ENCODE measurements at regions of chr20 and their contacts with region 1.

Region 1: GRCh38 chr20:3218307-3218988 is 9.2 kb downstream of the ITPA start:
- DNase-seq: peak; percentile 46
- H3K4me3 ChIP-seq: no peak overlapping the region
- H3K27ac ChIP-seq: no peak overlapping the region
- H3K4me1 ChIP-seq: no peaks in the 10 kb centered on the region
- H3K27me3 ChIP-seq: no peaks in the 10 kb centered on the region
- CTCF ChIP-seq: peak; percentile 93
- POLR2A ChIP-seq: no peak

Region 2: DNA sequence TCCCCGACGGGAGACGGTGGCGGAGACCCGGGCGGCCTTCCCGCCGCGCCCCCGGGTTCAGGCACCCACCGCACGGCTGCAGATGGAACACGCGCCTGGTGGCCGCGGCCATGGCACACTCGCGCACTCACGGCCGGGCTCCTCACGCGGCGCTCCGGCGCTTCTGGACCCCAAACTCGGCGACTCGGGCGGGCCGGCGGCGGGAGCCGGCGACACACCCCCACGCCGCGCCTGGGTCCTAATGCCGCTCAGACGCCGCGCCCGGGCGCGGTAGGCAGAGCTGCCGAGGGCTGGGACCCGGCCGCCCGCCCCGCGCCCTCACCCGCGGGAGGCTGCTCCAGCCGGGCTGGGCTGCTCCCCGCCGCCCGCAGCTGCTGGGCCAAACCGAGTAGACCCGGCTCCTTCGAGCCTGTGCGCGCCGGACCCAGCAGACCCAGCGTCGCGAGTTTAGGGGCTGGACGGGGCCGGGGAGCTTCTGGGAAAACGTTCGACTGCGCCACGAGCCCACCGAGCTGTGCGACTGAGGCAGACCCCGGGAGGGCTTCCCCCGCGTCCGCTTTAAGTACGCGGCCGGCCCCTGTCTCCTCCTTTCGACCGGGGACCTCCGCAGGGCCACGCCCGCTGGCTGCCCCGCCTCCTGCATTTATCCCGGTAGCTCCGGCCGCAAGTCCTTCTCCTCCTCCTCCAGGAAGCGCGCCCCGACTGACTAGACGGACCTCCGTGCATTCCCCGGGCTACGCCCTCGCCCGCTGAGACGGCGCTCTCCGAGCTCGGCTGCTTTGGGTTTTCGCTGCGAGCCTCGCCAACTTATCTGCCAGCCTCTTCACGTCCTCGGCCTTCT is 20.8 kb after region 1 on chr20 and contains the start of gene SLC4A11:
- CTCF ChIA-PET with region 1: interaction called, 5 read pairs
- POLR2A ChIA-PET with region 1: no interaction called
- dilution Hi-C with region 1: no loop called
- intact Hi-C with region 1: loop called (anchors 1 kb)
- DNase-seq: peak; percentile 69
- H3K4me3 ChIP-seq: peak within 1 kb of the TSS; percentile 71 to 72 (median 71)
- H3K27ac ChIP-seq: no peak within 1 kb of the TSS
- H3K4me1 ChIP-seq: peaks cover 14% of the 10 kb centered on the region
- H3K27me3 ChIP-seq: peaks cover 0 to 12% of the 10 kb centered on the region in 2 experiments
- CTCF ChIP-seq: no peak
- POLR2A ChIP-seq: peak; percentile 73
- total RNA-seq, gene SLC4A11: 10.2 and 15.5 TPM in 2 replicates

Region 3: DNA sequence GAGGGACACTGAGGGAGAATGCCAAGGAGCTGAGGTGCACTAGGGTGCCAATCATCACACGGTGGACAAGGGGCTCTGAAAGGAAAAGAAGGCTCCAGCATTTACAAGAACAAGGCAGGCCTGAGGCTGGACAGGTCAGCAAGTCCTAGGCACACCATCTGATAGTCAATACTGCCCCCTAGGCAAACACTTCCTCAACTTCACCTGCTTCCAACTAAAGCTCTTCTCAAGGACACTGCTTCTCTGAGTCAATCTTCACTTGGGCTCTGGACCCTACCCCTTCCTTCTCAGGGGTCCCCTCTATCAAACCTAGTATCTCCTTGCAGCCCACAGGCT is 58.2 kb after region 1 on chr20:
- CTCF ChIA-PET with region 1: interaction called, 21 read pairs
- POLR2A ChIA-PET with region 1: no interaction called
- dilution Hi-C with region 1: no loop called
- intact Hi-C with region 1: loop called (anchors 1 kb)
- DNase-seq: peak; percentile 37
- H3K4me3 ChIP-seq: no peak overlapping the region
- H3K27ac ChIP-seq: no peak overlapping the region
- H3K4me1 ChIP-seq: no peaks in the 10 kb centered on the region
- H3K27me3 ChIP-seq: no peaks in the 10 kb centered on the region
- CTCF ChIP-seq: peak; percentile 13 to 33
- POLR2A ChIP-seq: no peak

Region 4: GRCh38 chr20:3312940-3313682 is 94.7 kb after region 1 on chr20:
- CTCF ChIA-PET with region 1: interaction called, 31 read pairs
- POLR2A ChIA-PET with region 1: no interaction called
- dilution Hi-C with region 1: no loop called
- intact Hi-C with region 1: loop called (anchors 1 kb)
- DNase-seq: peak; percentile 82
- H3K4me3 ChIP-seq: no peak overlapping the region
- H3K27ac ChIP-seq: no peak overlapping the region
- H3K4me1 ChIP-seq: peaks cover 13% of the 10 kb centered on the region
- H3K27me3 ChIP-seq: no peaks in the 10 kb centered on the region
- CTCF ChIP-seq: no peak
- POLR2A ChIP-seq: no peak

Region 5: GRCh38 chr20:3470627-3471396 is 252.4 kb after region 1 on chr20 and contains the start of gene ATRN:
- CTCF ChIA-PET with region 1: no interaction called
- POLR2A ChIA-PET with region 1: no interaction called
- dilution Hi-C with region 1: no loop called
- intact Hi-C with region 1: loop called (anchors 10 kb)
- DNase-seq: peak; percentile 93
- H3K4me3 ChIP-seq: peak within 1 kb of the TSS; percentile 79 to 87 (median 85)
- H3K27ac ChIP-seq: peak within 1 kb of the TSS; percentile 79
- H3K4me1 ChIP-seq: peaks cover 11% of the 10 kb centered on the region
- H3K27me3 ChIP-seq: peaks cover 10 to 16% of the 10 kb centered on the region in 2 experiments
- CTCF ChIP-seq: no peak
- POLR2A ChIP-seq: peak; percentile 98
- total RNA-seq, gene ATRN: 33.1 and 35.1 TPM in 2 replicates